ENCODE measurements at regions of chr10 and their contacts with region 1.

Region 1: GRCh38 chr10:94439275-94439861 is 37.0 kb downstream of the TBC1D12 start:
- DNase-seq: no peak
- H3K4me3 ChIP-seq: no peak overlapping the region
- H3K27ac ChIP-seq: no peak overlapping the region
- H3K27me3 ChIP-seq: no peaks in the 10 kb centered on the region
- CTCF ChIP-seq: 0 out of 2 replicates have a peak, but pooled peaks have one; percentile 30

Region 2: DNA sequence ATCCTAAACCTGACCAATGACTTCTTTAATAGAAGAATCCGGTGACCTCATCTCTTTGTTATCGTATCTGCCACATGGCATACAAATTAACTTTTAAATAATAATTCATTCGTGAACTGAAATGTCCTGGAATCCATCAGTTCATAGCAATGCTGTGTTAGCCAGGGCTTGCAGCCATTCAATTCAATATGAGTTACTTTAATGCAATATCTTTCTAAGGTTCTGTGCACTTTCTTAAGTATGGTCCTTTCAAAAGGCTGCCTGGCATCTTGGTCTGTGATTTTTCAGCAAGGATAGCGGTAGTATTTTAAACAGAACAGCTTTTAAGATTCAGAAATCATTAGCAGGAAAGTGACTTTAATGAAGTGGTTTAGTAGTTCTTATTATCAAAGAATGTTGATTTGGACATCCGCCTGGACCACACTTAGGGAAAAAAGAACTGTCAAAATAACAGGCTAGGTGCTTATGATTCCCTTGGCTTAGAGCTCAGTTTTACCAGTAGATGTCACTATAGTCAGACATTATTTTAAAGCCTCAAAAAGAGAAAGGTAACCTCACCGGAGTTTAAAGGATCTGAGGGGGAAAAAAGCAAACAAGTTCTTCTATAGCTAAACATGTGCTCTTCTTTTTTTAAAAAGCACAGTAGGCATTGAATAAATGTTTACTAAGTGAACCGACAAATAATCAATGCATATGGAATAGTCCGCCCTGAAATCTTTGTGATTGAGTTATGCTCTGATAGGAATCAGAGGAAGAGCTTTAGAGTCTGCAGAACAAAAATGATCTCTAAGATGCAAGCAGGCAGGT is 522.9 kb before region 1 on chr10:
- CTCF ChIA-PET with region 1: interaction called, 119 read pairs
- POLR2A ChIA-PET with region 1: no interaction called
- DNase-seq: peak; percentile 8
- H3K4me3 ChIP-seq: no peak overlapping the region
- H3K27ac ChIP-seq: no peak overlapping the region
- H3K27me3 ChIP-seq: no peaks in the 10 kb centered on the region
- CTCF ChIP-seq: peak; percentile 68

Region 3: DNA sequence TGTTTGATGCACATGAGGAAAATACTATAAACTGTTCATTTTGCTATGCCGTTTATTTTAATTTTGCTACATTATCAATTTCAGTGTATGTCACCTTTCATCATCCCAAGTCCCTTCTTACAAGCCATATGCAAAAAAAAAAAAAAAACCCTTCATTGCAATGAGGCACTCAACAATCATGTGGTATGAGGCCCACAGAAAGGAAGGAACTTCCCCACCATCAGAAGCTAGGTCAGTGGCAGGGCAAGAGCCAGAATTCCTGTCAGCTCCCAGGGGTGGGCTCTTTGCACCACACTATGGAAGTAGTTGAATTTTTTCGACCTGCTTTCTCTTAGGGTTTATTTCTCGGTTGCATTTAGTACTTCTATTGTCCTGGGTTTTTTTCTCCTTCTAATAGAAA is 152.0 kb before region 1 on chr10:
- CTCF ChIA-PET with region 1: interaction called, 12 read pairs
- POLR2A ChIA-PET with region 1: no interaction called
- DNase-seq: no peak
- H3K4me3 ChIP-seq: no peak overlapping the region
- H3K27ac ChIP-seq: no peak overlapping the region
- H3K27me3 ChIP-seq: no peaks in the 10 kb centered on the region
- CTCF ChIP-seq: no peak

Region 4: GRCh38 chr10:94344522-94345122 is 94.7 kb before region 1 on chr10:
- CTCF ChIA-PET with region 1: interaction called, 50 read pairs
- POLR2A ChIA-PET with region 1: no interaction called
- DNase-seq: no peak
- H3K4me3 ChIP-seq: no peak overlapping the region
- H3K27ac ChIP-seq: no peak overlapping the region
- H3K27me3 ChIP-seq: no peaks in the 10 kb centered on the region
- CTCF ChIP-seq: no peak

Region 5: GRCh38 chr10:94383530-94383929 is 55.8 kb before region 1 on chr10:
- CTCF ChIA-PET with region 1: interaction called, 13 read pairs
- POLR2A ChIA-PET with region 1: no interaction called
- DNase-seq: no peak
- H3K4me3 ChIP-seq: no peak overlapping the region
- H3K27ac ChIP-seq: no peak overlapping the region
- H3K27me3 ChIP-seq: no peaks in the 10 kb centered on the region
- CTCF ChIP-seq: no peak

Region 6: GRCh38 chr10:94423627-94424026 is 15.7 kb before region 1 on chr10:
- CTCF ChIA-PET with region 1: interaction called, 34 read pairs
- POLR2A ChIA-PET with region 1: no interaction called
- DNase-seq: peak; percentile 38
- H3K4me3 ChIP-seq: no peak overlapping the region
- H3K27ac ChIP-seq: no peak overlapping the region
- H3K27me3 ChIP-seq: no peaks in the 10 kb centered on the region
- CTCF ChIP-seq: no peak

Region 7: GRCh38 chr10:94465684-94466083 is 26.3 kb after region 1 on chr10:
- CTCF ChIA-PET with region 1: interaction called, 16 read pairs
- POLR2A ChIA-PET with region 1: no interaction called
- DNase-seq: no peak
- H3K4me3 ChIP-seq: no peak overlapping the region
- H3K27ac ChIP-seq: no peak overlapping the region
- H3K27me3 ChIP-seq: no peaks in the 10 kb centered on the region
- CTCF ChIP-seq: no peak

Region 8: GRCh38 chr10:94591461-94592205 is 152.3 kb after region 1 on chr10:
- CTCF ChIA-PET with region 1: no interaction called
- POLR2A ChIA-PET with region 1: no interaction called
- DNase-seq: no peak
- H3K4me3 ChIP-seq: no peak overlapping the region
- H3K27ac ChIP-seq: no peak overlapping the region
- H3K27me3 ChIP-seq: no peaks in the 10 kb centered on the region
- CTCF ChIP-seq: no peak

Measured in AG04450 (cell line).